Activated CD4-positive, alpha-beta T cell treated with anti-CD3 and anti-CD28 coated beads, Interleukin-2, amount 10 ng/mL, durations not matched to agents 24 days and 14 days (primary cell): ENCODE measurements at regions of chrX and their contacts with region 1.

Region 1: DNA sequence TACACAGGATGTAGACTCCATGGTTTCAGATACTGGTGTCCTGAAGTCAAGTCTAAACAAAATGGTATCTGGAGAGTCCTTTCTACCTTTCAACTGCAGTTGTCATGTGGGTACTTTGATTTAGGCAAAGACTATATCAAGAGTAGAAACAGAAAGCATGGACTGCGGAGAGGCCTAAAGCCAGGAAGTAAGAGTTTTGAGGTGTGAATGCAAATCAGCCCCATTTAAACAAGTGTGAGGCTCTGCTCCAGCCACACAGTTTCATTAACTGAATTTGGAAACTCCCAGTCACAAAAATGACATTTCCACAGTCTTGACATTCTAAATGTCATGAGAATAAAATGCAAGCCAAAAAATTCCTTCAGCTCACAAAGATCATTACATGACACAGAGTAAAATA is 87.2 kb upstream of the MCF2 start:
- DNase-seq: peak; percentile 53
- H3K4me3 Mint-ChIP-seq: no peak overlapping the region
- H3K27ac Mint-ChIP-seq: peak overlapping the region; percentile 73
- H3K4me1 Mint-ChIP-seq: peaks cover 5% of the 10 kb centered on the region
- H3K27me3 Mint-ChIP-seq: no peaks in the 10 kb centered on the region

Region 2: DNA sequence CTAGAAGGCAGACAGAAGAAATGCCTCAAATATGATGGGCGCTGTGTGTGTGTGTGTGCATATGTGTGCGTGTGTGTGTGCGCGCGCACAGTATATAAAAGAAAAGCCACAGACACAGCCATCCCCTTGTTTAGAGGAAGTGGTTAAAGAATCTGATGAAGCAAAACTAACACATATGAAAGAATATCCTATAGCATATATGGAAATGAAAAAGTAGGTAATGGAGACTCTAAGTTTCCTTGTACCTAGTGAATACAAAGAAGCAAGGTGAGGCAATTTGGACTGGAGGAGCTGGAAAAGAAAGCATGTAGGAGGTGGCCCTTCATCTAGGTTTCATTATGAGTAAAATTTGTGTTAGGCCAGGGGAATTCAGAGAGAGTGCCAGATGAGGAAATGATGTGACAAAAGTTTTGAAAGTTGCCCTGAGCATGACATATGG is 28.6 kb before region 1 on chrX:
- intact Hi-C with region 1: loop called (anchors 2 kb)
- DNase-seq: peak; percentile 83
- H3K4me3 Mint-ChIP-seq: no peak overlapping the region
- H3K27ac Mint-ChIP-seq: no peak overlapping the region
- H3K4me1 Mint-ChIP-seq: peaks cover 2% of the 10 kb centered on the region
- H3K27me3 Mint-ChIP-seq: no peaks in the 10 kb centered on the region